Head of caudate nucleus (tissue), 42 donors: ENCODE measurements at regions of chr3 and their contacts with region 1.

Region 1: GRCh38 chr3:49339945-49340800 is at the start of gene USP4:
- DNase-seq: peak; percentile 55 to 96 (median 86)

Region 2: DNA sequence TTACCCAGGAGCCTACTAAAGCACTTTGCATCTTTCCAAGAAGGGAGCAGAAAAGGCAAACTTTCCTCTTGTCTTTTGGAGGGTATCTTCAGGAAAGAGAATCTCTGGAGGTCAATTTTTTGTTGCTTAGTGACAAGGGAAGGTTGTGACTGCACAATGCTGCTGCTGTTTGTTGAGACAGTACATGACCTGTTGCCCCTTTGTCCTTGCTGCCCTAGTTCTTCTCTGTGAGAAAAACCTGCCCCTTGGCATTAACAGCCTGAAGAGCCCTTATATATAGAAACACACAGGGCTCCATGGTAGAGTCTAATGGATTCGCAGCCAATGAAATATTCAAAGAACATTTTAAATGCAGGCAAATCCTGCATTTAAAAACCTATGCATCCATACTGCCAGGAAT is 148.4 kb before region 1 on chr3:
- intact Hi-C with region 1: no loop called
- DNase-seq: no peak

Region 3: GRCh38 chr3:49411968-49412631 is 71.9 kb after region 1 on chr3 and contains the starts of genes RHOA and TCTA:
- intact Hi-C with region 1: loop called (anchors 10 kb)
- DNase-seq: peak; percentile 95 to 100 (median 99)